ENCODE measurements at regions of chr3 and their contacts with region 1.

Region 1: DNA sequence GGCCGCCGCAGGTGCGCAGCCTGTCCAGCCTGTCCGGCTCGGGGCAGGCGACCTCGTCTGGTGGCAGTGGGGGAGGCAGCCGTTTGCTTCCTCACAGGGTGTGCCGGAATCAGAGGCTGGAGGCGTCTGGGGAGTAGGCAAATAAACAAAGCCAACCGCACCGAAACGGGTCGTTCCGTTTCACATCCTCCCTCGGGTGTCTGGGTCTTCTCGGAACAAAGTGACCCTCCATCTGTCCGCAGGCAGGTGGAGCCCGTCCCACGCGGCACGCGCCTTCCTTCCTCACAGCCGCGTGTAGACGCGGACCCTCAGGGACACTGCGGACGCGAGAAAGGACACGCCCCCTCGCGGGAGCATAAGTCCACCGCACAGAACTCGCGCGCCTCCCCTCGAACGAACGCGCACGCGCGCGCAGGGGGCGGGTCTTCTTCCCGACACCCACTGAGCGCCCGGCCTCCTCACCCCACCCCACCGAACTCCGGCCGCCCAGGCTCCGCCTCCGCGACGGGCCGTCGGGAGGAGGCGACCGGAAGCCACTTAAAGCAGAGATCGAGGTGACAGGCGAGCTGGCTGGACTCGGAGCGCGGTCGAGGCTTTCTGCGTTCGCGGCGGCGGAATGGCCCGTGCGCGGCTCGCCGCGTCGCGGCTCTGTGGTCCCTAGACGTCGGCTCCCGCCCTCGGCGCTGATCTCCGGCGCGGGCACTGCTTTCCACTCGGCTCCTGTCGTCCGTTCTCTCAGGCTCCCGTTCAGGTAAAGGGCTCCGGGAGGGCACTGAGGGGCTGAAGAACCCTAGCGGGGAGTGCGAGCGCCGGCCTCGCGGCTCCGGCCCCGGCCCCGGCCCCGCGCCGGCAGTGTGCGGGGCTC is at the start of gene TIPARP:
- H3K4me3 Mint-ChIP-seq: peak within 1 kb of the TSS; percentile 93
- H3K27ac Mint-ChIP-seq: peak within 1 kb of the TSS; percentile 88
- H3K4me1 Mint-ChIP-seq: peaks cover 39% of the 10 kb centered on the region
- H3K27me3 Mint-ChIP-seq: no peaks in the 10 kb centered on the region

Region 2: GRCh38 chr3:156554842-156555687 is 119.2 kb before region 1 on chr3 and contains the start of gene SSR3:
- intact Hi-C with region 1: loop called (anchors 1 kb)
- H3K4me3 Mint-ChIP-seq: peak within 1 kb of the TSS; percentile 96
- H3K27ac Mint-ChIP-seq: peak within 1 kb of the TSS; percentile 97
- H3K4me1 Mint-ChIP-seq: peaks cover 45% of the 10 kb centered on the region
- H3K27me3 Mint-ChIP-seq: no peaks in the 10 kb centered on the region

Region 3: DNA sequence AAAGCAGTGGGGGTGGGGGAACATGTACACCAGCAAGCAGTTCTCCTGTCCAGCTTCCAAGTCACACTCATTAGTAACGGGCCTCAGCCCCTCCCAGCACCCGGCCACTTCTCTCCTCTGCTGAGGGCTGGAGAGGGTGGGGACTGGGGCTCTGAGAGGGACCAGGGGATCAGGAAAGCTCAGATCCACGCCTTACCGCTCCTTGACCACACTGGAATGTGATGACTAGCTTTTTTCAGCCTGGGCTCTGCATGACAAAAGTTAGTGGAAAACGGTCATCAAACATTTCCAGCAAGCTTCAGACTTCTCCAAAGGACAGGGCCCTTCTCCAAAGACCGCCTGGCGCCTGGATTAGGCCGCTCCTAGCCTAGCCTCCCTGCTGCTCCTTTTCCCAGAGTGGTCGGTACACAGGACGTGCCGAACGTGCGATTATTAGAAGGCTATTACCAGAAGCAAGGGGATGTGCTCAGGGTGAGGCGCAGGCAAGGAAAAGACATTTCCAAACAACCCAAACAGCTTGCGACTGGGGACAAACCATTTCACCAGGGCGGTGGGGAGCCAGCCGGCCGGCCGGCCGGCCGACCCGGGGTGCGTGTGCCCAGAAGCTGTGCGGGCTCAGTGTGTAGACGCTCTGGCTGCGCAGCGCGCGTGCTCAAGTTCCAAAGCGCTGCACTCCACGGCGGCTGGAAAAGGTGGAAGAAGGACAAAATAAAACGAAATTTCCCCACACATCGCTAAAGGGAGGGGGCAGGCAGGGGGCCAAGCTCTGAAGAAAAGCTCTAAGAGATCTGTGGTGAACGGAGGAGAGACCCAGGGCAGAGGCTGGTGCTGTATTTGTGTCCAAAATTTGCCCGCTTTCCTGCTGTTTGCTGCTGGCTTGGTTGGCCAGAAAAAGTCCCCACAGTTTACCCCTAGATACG is 68.3 kb before region 1 on chr3:
- intact Hi-C with region 1: loop called (anchors 5 kb)
- H3K4me3 Mint-ChIP-seq: peak overlapping the region; percentile 74
- H3K27ac Mint-ChIP-seq: peak overlapping the region; percentile 96
- H3K4me1 Mint-ChIP-seq: peaks cover 38% of the 10 kb centered on the region
- H3K27me3 Mint-ChIP-seq: no peaks in the 10 kb centered on the region

Region 4: GRCh38 chr3:156816800-156817645 is 142.7 kb after region 1 on chr3:
- intact Hi-C with region 1: loop called (anchors 2 kb)
- H3K4me3 Mint-ChIP-seq: peak overlapping the region; percentile 75
- H3K27ac Mint-ChIP-seq: peak overlapping the region; percentile 80
- H3K4me1 Mint-ChIP-seq: peaks cover 40% of the 10 kb centered on the region
- H3K27me3 Mint-ChIP-seq: peaks cover 2% of the 10 kb centered on the region

Region 5: GRCh38 chr3:157081681-157082210 is 407.5 kb after region 1 on chr3:
- intact Hi-C with region 1: loop called (anchors 2 kb)
- H3K4me3 Mint-ChIP-seq: no peak overlapping the region
- H3K27ac Mint-ChIP-seq: no peak overlapping the region
- H3K4me1 Mint-ChIP-seq: no peaks in the 10 kb centered on the region
- H3K27me3 Mint-ChIP-seq: peaks cover 8% of the 10 kb centered on the region

Region 6: GRCh38 chr3:157088601-157089454 is 414.6 kb after region 1 on chr3:
- intact Hi-C with region 1: loop called (anchors 2 kb)
- H3K4me3 Mint-ChIP-seq: peak overlapping the region; percentile 81
- H3K27ac Mint-ChIP-seq: peak overlapping the region; percentile 96
- H3K4me1 Mint-ChIP-seq: peaks cover 30% of the 10 kb centered on the region
- H3K27me3 Mint-ChIP-seq: peaks cover 5% of the 10 kb centered on the region

Region 7: DNA sequence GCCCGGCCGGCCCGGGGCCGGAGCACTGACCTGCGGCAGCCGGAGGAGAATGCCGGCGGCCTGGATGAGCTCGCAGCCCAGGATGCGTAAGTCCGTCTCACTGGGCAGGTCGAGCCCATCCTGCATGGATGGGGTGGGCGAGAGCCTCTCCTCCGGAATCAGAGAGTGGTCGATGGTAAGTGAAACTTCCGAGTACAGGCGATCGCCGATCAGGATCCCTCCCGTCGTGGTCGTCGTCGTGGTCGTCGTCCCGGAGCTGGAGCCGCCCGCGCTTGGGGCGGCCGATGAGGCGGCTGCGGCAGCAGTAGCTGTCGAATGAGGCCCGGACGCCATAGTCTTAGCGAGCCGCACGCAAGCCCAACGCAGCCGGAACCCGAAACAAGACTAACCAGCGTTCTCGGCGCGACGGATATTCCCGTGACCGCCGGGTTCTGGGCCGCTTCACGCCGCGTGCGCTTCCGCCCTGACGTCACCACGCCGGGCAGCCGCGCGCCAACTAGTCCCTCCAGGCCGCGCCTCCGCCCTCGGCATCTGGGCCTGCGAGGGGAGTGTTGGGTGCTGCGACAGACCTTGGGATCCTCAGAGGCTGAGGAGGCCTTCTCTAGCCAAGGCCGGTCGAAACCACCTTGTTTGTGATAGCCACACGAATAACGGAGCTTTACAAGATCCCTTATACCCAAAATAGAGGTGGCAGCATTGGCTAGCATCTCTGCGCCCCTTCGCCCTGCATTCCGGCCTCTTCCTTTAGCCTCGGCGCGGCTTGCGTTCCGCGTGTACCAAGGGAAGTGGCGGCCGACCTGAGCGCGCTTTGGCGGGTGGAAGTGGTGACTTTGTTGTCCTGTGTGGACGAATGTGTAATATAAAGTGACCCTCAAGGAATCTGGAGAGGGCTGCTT is 485.7 kb after region 1 on chr3 and contains the start of gene CCNL1:
- intact Hi-C with region 1: loop called (anchors 1 kb)
- H3K4me3 Mint-ChIP-seq: peak within 1 kb of the TSS; percentile 99
- H3K27ac Mint-ChIP-seq: peak within 1 kb of the TSS; percentile 98
- H3K4me1 Mint-ChIP-seq: peaks cover 47% of the 10 kb centered on the region
- H3K27me3 Mint-ChIP-seq: no peaks in the 10 kb centered on the region